A549 (cell line): ENCODE measurements at regions of chr11 and their contacts with region 1.

Region 1: DNA sequence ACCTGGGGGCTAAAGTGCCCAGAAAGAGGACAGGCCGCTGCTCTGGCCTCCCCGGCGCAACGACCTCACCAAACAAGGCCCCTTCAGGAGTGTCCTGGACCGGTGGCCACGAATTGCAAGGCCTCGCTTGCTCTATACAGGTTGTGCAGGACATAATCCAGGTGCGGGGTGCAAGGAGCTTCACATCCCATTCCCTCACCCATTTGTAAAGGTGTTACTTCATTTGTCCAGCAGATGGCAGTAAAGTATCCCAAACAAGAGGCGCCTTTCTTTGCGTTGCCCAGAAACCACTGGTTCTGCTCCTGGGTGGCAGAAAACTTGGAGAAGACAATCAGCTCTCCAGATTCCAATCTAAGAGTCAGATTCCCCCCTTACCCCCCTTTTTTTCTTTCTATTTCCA is 35.9 kb upstream of the PRDM11 start:
- DNase-seq: peak; percentile 70 to 78
- ATAC-seq: peak; percentile 74 to 90; a peak in 5 of 6 replicates
- H3K4me3 ChIP-seq: no peak overlapping the region
- H3K27ac ChIP-seq: no peak overlapping the region
- H3K4me1 ChIP-seq: no peaks in the 10 kb centered on the region
- CTCF ChIP-seq: peak; percentile 81
- EP300 ChIP-seq: no peak
- POLR2A ChIP-seq: no peak
- RAD21 ChIP-seq: peak; percentile 91 to 93

Region 2: DNA sequence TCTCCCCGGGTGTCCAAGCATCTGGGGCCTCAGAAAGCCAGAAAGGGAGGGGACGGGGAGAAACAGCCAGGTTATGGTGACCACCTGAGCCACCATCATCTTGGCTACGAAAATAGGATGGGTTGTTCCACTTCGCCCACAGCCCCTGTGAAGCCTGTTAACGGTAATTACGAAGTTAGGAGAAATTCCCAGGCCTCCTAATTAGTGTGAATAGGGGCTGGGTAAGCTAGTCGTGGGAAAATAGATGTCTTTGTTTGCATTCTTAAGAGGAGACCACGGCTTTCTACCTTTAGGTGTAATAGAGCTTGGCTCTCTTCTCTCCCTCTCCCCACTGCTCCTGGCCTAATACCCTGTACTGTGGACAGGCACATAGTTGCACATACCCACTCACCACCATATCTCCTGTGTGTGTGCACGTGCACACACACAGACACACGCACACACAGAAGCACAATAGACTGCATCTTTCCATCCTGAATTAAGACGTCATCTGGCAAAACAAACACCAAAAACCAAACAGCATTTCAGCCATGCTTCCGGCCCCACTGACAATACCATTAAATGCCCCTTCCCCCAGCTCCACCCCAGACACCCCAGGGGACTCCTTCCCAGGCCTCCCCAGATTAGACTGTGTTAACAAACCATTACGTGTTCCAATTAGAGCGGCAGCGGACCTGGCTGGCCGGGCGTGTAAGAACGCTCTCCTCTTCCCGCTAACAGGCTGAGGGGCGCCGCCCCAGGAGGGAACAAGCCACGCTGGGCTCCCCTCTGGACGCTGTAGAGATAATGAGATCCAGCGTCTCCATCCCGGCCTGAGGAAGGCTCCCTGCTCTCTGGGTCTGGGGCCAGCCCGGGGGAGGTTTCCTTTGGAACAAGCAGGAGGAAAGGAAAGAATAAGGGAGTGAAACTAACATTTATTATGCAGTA is 232.7 kb before region 1 on chr11:
- CTCF ChIA-PET with region 1: no interaction called
- POLR2A ChIA-PET with region 1: no interaction called
- DNase-seq: no peak
- ATAC-seq: no peak
- H3K4me3 ChIP-seq: no peak overlapping the region
- H3K27ac ChIP-seq: no peak overlapping the region
- H3K4me1 ChIP-seq: no peaks in the 10 kb centered on the region; the same call in 2 of the 3 replicates
- CTCF ChIP-seq: no peak
- EP300 ChIP-seq: no peak
- POLR2A ChIP-seq: no peak
- RAD21 ChIP-seq: no peak

Region 3: DNA sequence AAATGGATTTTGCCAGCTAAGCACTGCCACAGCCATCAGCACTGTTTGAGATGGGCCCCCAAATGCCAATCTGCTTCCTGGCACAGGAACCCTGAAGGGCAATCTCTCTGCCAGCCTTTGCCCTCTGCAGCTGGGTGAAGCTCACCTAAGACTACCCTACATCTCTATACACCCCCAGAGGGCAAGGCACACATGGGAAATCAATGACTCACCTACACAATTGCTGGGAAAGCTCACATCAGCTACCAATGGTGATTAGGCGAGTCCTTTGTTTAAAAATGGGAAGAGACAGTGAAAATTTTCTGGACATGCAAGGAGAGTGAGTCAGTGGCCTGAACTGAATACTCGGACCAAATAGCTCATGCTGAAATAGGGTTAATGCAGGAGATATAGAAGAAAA is 23.3 kb after region 1 on chr11:
- CTCF ChIA-PET with region 1: interaction called, 24 read pairs
- POLR2A ChIA-PET with region 1: no interaction called
- DNase-seq: no peak
- ATAC-seq: no peak
- H3K4me3 ChIP-seq: no peak overlapping the region
- H3K27ac ChIP-seq: no peak overlapping the region
- H3K4me1 ChIP-seq: peaks cover 7% of the 10 kb centered on the region; the same call in 1 of the 3 replicates
- CTCF ChIP-seq: no peak
- EP300 ChIP-seq: no peak
- POLR2A ChIP-seq: no peak
- RAD21 ChIP-seq: no peak

Region 4: DNA sequence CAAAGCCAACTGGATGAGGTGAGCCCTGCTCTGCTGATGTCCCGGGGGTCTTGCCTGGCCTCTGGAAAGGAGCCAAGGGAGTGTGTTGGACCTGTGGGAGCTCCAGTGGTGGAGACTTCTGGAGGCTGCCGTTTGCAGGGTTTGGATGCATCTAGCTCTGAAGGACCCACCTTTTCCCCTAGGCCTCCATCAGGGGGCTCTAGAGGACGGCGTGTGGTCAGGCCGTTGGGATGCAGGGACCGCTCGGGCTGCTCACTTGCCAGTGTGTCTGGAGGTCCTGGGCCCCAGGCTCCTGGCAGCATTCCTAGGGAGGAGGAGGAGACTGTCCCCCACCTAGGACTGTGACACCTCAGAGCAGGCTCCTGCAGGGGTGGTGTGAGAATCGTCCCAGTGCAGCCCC is 94.2 kb after region 1 on chr11:
- CTCF ChIA-PET with region 1: interaction called, 13 read pairs
- POLR2A ChIA-PET with region 1: no interaction called
- DNase-seq: no peak
- ATAC-seq: peak in 1 of 2 experiments; percentile 51; a peak in 1 of 6 replicates
- H3K4me3 ChIP-seq: no peak overlapping the region
- H3K27ac ChIP-seq: no peak overlapping the region
- H3K4me1 ChIP-seq: no peaks in the 10 kb centered on the region
- CTCF ChIP-seq: no peak
- EP300 ChIP-seq: no peak
- POLR2A ChIP-seq: no peak
- RAD21 ChIP-seq: no peak

Region 5: GRCh38 chr11:45238724-45239123 is 128.2 kb after region 1 on chr11:
- CTCF ChIA-PET with region 1: interaction called, 19 read pairs
- POLR2A ChIA-PET with region 1: no interaction called
- DNase-seq: peak; percentile 33 to 52
- ATAC-seq: peak; percentile 80 to 85
- H3K4me3 ChIP-seq: no peak overlapping the region
- H3K27ac ChIP-seq: peak overlapping the region in 1 of 2 experiments; percentile 52; a peak in 2 of 6 replicates
- H3K4me1 ChIP-seq: 0 out of 3 replicates have a peak, but pooled peaks cover 3% of the 10 kb centered on the region
- CTCF ChIP-seq: no peak
- EP300 ChIP-seq: no peak
- POLR2A ChIP-seq: no peak
- RAD21 ChIP-seq: no peak

Region 6: GRCh38 chr11:45285930-45286632 is 175.5 kb after region 1 on chr11 and contains the start of gene SYT13:
- CTCF ChIA-PET with region 1: interaction called, 64 read pairs
- POLR2A ChIA-PET with region 1: no interaction called
- DNase-seq: peak; percentile 30 to 62
- ATAC-seq: peak; percentile 86 to 91
- H3K4me3 ChIP-seq: peak within 1 kb of the TSS; percentile 65
- H3K27ac ChIP-seq: peak within 1 kb of the TSS; percentile 73 to 87
- H3K4me1 ChIP-seq: peaks cover 12% of the 10 kb centered on the region
- CTCF ChIP-seq: no peak
- EP300 ChIP-seq: no peak
- POLR2A ChIP-seq: peak; percentile 24; the same call in 1 of the 2 replicates
- RAD21 ChIP-seq: no peak
- polyA plus RNA-seq, gene SYT13: 8.1 and 10.7 TPM in 2 replicates

Region 7: DNA sequence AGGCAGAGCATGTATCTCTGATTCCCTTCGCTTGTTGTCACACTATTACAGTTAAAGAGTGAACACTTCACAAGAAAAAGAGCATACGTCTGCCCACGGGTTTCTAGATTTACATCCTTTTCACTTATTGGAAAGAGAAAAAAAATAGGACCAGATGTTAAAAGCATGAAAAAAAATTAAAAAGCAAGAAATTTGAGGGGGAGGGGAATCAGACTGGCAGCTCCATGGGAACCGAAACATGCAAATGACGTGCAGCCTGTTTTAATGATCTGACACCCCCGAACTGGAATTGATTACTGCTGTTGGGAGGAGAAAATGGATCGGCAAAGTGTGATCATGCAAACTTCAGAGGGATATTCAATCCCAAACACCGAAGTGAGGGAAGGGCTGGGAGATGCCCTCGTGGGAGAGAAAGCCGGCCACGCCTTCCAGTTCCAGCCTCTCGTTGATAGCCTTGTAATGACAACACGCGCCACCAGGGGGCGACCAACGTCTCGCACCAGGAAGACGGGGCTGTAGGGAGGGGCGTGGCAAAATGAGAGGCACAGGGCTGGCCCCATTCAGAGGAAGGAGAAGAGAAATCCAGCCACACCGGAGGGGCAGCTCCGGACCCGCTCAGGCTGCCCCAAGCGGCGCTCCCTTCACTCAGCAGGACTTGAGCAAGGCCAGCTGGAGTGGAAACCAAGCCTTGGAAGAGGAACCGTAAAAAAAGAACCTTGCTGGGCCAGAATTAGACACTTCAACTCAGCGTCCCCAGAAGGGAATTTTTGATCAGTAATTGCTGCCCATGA is 229.4 kb after region 1 on chr11:
- CTCF ChIA-PET with region 1: interaction called, 320 read pairs
- POLR2A ChIA-PET with region 1: no interaction called
- DNase-seq: peak; percentile 91 to 95
- ATAC-seq: peak; percentile 90 to 99
- H3K4me3 ChIP-seq: peak overlapping the region; percentile 32
- H3K27ac ChIP-seq: no peak overlapping the region
- H3K4me1 ChIP-seq: no peaks in the 10 kb centered on the region
- CTCF ChIP-seq: peak; percentile 81
- EP300 ChIP-seq: no peak
- POLR2A ChIP-seq: no peak
- RAD21 ChIP-seq: peak; percentile 64 to 66